Gastrocnemius medialis (tissue), 4 donors: ENCODE measurements at regions of chr7 and their contacts with region 1.

Region 1: GRCh38 chr7:31633894-31634494 is 53.0 kb upstream of the PPP1R17 start:
- DNase-seq: no peak
- ATAC-seq: peak; percentile 62 to 72
- H3K4me3 ChIP-seq: no peak overlapping the region
- H3K27ac ChIP-seq: no peak overlapping the region
- H3K4me1 ChIP-seq: peaks cover 0 to 4% of the 10 kb centered on the region in 2 donors
- H3K27me3 ChIP-seq: no peaks in the 10 kb centered on the region
- CTCF ChIP-seq: peak in 3 of 5 experiments; percentile 43 to 54 (median 46)
- POLR2A ChIP-seq: no peak

Region 2: DNA sequence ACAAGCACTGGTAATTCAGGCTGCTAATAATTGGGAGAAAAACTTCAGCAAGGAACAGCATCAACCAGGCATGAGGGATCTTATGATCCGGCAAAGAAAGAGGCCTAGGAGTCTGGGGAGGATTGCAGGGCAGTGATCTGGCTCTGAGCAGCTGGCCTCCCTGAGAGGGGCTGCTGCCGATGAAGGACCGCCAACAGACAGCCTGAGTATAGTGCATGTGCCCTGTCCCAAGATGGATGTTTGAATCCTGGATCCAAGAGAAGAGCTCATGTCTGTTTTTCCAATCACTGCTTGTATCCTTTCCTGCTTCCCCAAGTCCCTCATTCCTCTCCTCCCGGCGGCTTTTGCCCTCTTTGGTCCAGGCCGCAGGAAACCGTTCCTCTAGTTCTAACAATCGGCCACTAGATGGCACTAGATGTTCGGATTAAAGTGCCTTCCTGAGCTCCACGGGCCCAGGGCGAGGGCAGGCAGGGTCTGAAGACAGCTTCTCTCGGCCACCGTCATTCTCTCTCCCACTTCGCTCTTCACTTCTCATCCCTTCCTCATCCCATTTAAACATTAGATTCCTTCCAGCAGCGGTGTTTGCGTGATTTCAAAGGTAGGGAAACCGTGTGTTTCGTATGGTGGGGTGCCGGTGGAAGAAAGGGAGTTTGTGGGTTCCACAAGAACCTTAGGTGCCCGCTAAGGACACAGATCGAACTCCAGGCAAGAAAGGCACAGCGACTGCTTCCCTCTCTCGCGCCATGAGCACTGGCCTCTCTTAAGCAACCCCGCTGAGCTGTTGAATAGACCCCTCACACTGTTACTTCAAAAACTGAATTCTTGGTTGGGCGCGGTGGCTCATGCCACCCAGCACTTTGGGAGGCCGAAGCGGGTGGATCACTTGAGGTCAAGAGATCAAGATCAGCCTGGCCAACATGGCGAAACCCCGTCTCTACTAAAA is 499.5 kb before region 1 on chr7:
- in situ Hi-C with region 1: loop called in 1 of 4 experiments (anchors 10 kb)
- intact Hi-C with region 1: loop called (anchors 1 kb)
- DNase-seq: peak in 1 of 2 donors; percentile 24
- ATAC-seq: peak; percentile 70 to 74
- H3K4me3 ChIP-seq: no peak overlapping the region
- H3K27ac ChIP-seq: no peak overlapping the region
- H3K4me1 ChIP-seq: no peaks in the 10 kb centered on the region
- H3K27me3 ChIP-seq: no peaks in the 10 kb centered on the region
- CTCF ChIP-seq: peak; percentile 26 to 73 (median 59)
- POLR2A ChIP-seq: no peak

Region 3: DNA sequence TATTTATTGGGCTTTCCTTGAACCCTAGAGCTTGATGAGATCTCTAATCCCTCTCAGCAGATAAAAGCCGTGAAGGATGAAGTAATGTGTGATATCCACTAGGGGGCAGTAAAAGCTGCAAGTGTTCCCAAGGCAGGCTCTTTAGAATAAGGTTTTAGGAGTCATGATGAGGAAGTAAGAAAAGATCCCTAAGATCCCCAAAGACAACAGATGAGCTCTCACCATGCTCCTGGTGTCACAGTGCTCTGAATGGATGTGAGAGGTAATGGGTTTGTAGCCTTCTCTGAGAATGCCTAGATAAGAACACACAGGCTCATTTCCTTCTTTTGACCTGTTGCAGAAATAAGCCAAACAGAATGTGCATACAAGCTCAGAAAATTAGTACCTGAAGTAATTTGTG is 190.5 kb before region 1 on chr7:
- in situ Hi-C with region 1: no loop called
- intact Hi-C with region 1: loop called (anchors 2 kb)
- DNase-seq: no peak
- ATAC-seq: peak in 1 of 2 donors; percentile 53
- H3K4me3 ChIP-seq: no peak overlapping the region
- H3K27ac ChIP-seq: no peak overlapping the region
- H3K4me1 ChIP-seq: no peaks in the 10 kb centered on the region
- H3K27me3 ChIP-seq: no peaks in the 10 kb centered on the region
- CTCF ChIP-seq: peak in 4 of 5 experiments; percentile 23 to 65 (median 52)
- POLR2A ChIP-seq: no peak